Naive thymus-derived CD8-positive, alpha-beta T cell (primary cell): ENCODE measurements at regions of chr7 and their contacts with region 1.

Region 1: GRCh38 chr7:100158229-100159098 is at the start of gene TRAPPC14:
- DNase-seq: peak; percentile 80 to 94 (median 88)
- ATAC-seq: peak; percentile 77 to 85
- H3K4me3 Mint-ChIP-seq: peak within 1 kb of the TSS; percentile 79 to 90 (median 88)
- H3K27ac Mint-ChIP-seq: peak within 1 kb of the TSS; percentile 77 to 95 (median 92)
- H3K4me1 Mint-ChIP-seq: peaks cover 18 to 64% (median 55%) of the 10 kb centered on the region in 4 donors
- H3K27me3 Mint-ChIP-seq: no peaks in the 10 kb centered on the region
- polyA plus RNA-seq, gene TRAPPC14: 2.1 to 4.5 (median 2.4) TPM

Region 2: GRCh38 chr7:100171087-100171681 is 12.7 kb after region 1 on chr7:
- POLR2A ChIA-PET with region 1: interaction called, 358 read pairs
- DNase-seq: peak in 5 of 10 donors; percentile 47 to 77 (median 64)
- ATAC-seq: peak; percentile 37 to 59
- H3K4me3 Mint-ChIP-seq: peak overlapping the region; percentile 83 to 95 (median 86)
- H3K27ac Mint-ChIP-seq: peak overlapping the region; percentile 89 to 99 (median 94)
- H3K4me1 Mint-ChIP-seq: peaks cover 47 to 80% (median 66%) of the 10 kb centered on the region in 4 donors
- H3K27me3 Mint-ChIP-seq: peaks cover 0 to 20% (median 0%) of the 10 kb centered on the region in 5 donors

Region 3: DNA sequence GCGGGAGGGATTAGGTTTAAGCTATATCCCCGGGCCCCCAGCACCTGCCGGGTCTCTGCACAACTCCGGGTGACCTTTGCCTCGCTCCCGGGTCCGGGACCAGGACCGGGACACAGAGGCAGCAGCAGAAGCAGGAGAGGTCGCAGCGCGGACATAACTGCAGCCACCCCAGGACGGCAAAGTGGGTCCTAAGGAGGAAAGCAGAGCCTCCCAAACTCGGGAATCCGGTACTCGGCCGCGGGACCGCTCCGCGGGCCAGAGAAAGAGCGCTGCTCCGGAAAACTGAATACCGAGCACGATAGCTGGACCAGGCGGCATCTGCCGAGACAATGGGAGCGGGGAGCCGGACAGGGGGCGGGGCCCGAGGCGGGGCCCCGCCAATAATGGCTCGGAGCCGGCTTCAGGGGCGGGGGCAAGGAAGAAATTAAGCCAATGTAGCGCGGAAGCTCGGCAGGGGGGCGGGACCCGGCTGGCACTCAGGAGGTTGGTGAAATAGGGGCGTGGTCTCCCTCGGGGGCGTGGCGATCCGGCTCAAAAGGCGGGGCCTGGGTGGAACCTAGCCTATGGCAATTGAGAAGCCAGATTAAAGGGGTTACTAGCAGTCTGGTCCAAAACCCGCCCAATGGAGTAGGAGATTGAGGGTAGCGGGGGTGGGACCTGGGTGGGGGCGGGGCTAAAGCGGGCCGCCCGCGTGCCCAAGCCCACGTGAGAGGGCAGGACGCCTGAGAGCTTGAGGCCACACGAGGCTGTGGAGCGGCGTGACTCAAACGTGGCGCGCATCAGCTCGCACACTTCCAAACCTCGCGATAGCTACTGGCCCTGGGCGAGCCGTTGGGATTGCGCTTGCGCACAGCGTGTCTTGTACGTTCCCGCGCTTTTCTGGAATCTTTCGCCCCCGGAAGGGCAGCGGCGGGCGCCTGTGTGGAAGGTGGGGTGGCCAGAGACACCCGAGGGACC is 18.9 kb after region 1 on chr7 and contains the starts of genes GPC2 and STAG3:
- POLR2A ChIA-PET with region 1: interaction called, 358 read pairs
- DNase-seq: peak; percentile 94 to 99 (median 98)
- ATAC-seq: peak; percentile 87 to 88
- H3K4me3 Mint-ChIP-seq: peak within 1 kb of the TSS; percentile 64 to 83 (median 80)
- H3K27ac Mint-ChIP-seq: peak within 1 kb of the TSS; percentile 22 to 91 (median 81)
- H3K4me1 Mint-ChIP-seq: peaks cover 27 to 62% (median 51%) of the 10 kb centered on the region in 4 donors
- H3K27me3 Mint-ChIP-seq: no peaks in the 10 kb centered on the region
- polyA plus RNA-seq, gene GPC2: 0.09 to 1.1 (median 0.42) TPM
- polyA plus RNA-seq, gene STAG3: 6.0 to 8.6 (median 6.9) TPM

Region 4: DNA sequence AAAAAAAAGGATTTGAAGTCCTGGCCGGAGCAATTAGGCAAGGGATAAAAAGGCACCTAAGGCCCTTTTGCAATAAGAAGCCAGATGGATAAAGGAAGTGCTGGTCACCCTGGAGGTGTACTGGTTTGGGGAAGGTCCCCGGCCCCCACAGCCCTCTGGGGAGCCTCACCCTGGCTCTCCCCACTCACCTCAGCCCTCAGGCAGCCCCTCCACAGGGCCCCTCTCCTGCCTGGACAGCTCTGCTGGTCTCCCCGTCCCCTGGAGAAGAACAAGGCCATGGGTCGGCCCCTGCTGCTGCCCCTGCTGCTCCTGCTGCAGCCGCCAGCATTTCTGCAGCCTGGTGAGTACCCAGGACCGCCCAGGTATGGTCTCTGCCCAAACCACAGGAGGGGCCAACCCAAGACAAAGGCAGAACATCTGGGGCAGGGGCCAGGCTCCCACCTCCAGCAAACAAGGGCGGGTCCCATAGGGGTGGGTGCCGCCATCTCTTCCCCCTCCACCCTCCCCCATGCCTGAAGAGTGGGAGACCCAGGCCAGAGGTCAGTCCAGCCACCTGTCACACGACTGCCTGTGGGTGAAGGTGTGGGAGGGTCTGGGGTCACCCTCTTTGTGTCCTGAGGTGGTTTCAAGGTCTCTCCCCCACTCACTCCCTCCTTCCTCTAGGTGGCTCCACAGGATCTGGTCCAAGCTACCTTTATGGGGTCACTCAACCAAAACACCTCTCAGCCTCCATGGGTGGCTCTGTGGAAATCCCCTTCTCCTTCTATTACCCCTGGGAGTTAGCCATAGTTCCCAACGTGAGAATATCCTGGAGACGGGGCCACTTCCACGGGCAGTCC is 199.8 kb after region 1 on chr7 and contains the start of gene PILRB:
- POLR2A ChIA-PET with region 1: no interaction called
- DNase-seq: no peak
- ATAC-seq: no peak
- H3K4me3 Mint-ChIP-seq: no peak within 1 kb of the TSS
- H3K27ac Mint-ChIP-seq: peak within 1 kb of the TSS in 6 of 10 donors; percentile 33 to 90 (median 53)
- H3K4me1 Mint-ChIP-seq: peaks cover 14 to 32% (median 17%) of the 10 kb centered on the region in 4 donors
- H3K27me3 Mint-ChIP-seq: no peaks in the 10 kb centered on the region
- polyA plus RNA-seq, gene PILRB: 2.5 to 14.6 (median 3.3) TPM